ENCODE measurements at regions of chr1 and their contacts with region 1.

Region 1: DNA sequence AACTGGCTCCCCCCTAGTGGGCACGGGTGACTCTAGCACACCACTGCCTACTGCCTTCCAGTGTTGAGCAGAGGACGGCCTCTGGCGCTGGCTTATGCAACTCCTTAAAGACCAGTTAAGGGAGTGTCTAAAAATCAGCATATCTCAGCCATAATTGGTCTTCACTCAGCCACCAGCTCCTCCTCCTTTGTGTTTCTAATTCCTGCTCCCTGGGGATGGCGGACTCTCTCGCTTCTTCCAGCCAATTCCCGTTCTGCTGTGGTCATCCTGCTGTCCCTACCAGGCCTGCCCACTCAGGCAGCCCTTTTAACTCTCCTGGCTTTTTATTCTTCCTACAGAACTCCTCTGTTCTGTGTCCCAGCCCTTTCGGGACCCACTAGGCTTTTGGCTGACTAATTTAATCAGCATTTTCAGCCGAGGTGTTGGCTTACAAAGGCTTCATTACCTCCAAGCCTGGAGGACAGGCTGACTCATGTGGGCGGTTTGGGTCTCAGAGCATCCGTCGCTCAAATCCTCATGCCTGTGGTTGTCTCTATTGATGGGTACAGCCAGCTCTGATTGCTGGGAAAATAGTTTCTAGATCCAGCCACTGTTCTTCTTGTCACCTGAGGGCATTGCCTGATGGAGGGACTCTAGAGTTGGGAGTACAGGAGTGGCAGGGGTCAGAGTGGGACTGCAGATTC is 332.5 kb downstream of the CAMTA1 start:
- DNase-seq: peak; percentile 43
- H3K4me3 ChIP-seq: no peak overlapping the region
- H3K27ac ChIP-seq: no peak overlapping the region
- H3K4me1 ChIP-seq: no peaks in the 10 kb centered on the region
- H3K27me3 ChIP-seq: peaks cover 30% of the 10 kb centered on the region
- CTCF ChIP-seq: no peak

Region 2: DNA sequence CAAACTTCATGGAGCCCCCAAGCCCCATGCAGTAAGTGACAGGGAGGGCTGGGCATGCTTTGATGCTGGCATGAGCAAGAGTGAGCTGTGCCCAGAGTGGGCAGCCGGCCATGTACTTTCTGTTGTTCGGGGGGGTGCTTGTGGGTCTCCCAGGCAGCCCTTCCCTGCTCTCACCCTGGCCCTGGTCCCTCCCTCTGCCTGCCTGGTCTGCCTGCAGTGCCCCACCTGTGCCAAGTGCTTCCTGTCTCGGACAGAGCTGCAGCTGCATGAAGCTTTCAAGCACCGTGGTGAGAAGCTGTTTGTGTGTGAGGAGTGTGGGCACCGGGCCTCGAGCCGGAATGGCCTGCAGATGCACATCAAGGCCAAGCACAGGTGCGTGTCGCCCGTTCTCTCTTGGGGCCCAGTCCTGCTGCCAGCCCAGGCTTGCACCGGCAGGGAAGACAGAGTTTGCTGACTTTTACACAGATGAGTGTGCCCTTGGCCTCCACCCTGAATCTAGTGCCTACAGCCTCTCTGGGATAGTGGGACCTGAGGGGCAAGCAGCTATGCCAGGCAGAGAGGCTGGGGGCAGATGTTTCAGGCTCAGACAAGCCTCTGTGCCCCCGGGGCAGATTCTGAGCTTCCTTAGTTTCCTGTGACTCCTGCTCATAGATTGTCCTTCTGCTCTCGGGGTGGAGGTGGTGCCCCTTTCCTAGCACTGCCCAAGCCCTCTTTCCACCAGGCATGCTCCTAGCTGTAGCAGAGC is 530.3 kb before region 1 on chr1:
- CTCF ChIA-PET with region 1: no interaction called
- POLR2A ChIA-PET with region 1: no interaction called
- intact Hi-C with region 1: no loop called
- DNase-seq: no peak
- H3K4me3 ChIP-seq: no peak overlapping the region
- H3K27ac ChIP-seq: no peak overlapping the region
- H3K4me1 ChIP-seq: no peaks in the 10 kb centered on the region
- H3K27me3 ChIP-seq: no peaks in the 10 kb centered on the region
- CTCF ChIP-seq: no peak

Region 3: GRCh38 chr1:7172804-7173203 is 55.1 kb after region 1 on chr1:
- CTCF ChIA-PET with region 1: no interaction called
- POLR2A ChIA-PET with region 1: no interaction called
- intact Hi-C with region 1: loop called (anchors 10 kb)
- DNase-seq: no peak
- H3K4me3 ChIP-seq: no peak overlapping the region
- H3K27ac ChIP-seq: no peak overlapping the region
- H3K4me1 ChIP-seq: no peaks in the 10 kb centered on the region
- H3K27me3 ChIP-seq: peaks cover 22% of the 10 kb centered on the region
- CTCF ChIP-seq: no peak

Measured in A673 (cell line).